A673 (cell line): ENCODE measurements at regions of chr16 and their contacts with region 1.

Region 1: GRCh38 chr16:14489460-14489859 is 140.6 kb downstream of the PARN start:
- DNase-seq: peak; percentile 78
- H3K4me3 ChIP-seq: no peak overlapping the region
- H3K27ac ChIP-seq: no peak overlapping the region
- H3K4me1 ChIP-seq: peaks cover 33% of the 10 kb centered on the region
- H3K27me3 ChIP-seq: no peaks in the 10 kb centered on the region
- CTCF ChIP-seq: peak; percentile 54

Region 2: GRCh38 chr16:14285513-14286385 is 203.7 kb before region 1 on chr16:
- CTCF ChIA-PET with region 1: no interaction called
- POLR2A ChIA-PET with region 1: no interaction called
- intact Hi-C with region 1: no loop called
- DNase-seq: peak; percentile 97
- H3K4me3 ChIP-seq: peak overlapping the region; percentile 79
- H3K27ac ChIP-seq: peak overlapping the region; percentile 67
- H3K4me1 ChIP-seq: peaks cover 1% of the 10 kb centered on the region
- H3K27me3 ChIP-seq: no peaks in the 10 kb centered on the region
- CTCF ChIP-seq: no peak

Region 3: GRCh38 chr16:14300705-14301168 is 188.7 kb before region 1 on chr16:
- CTCF ChIA-PET with region 1: interaction called, 19 read pairs
- POLR2A ChIA-PET with region 1: no interaction called
- intact Hi-C with region 1: no loop called
- DNase-seq: peak; percentile 67
- H3K4me3 ChIP-seq: peak overlapping the region; percentile 49
- H3K27ac ChIP-seq: no peak overlapping the region
- H3K4me1 ChIP-seq: peaks cover 9% of the 10 kb centered on the region
- H3K27me3 ChIP-seq: no peaks in the 10 kb centered on the region
- CTCF ChIP-seq: peak; percentile 55

Region 4: GRCh38 chr16:14427371-14427948 is 62.0 kb before region 1 on chr16:
- CTCF ChIA-PET with region 1: no interaction called
- POLR2A ChIA-PET with region 1: no interaction called
- intact Hi-C with region 1: no loop called
- DNase-seq: no peak
- H3K4me3 ChIP-seq: no peak overlapping the region
- H3K27ac ChIP-seq: no peak overlapping the region
- H3K4me1 ChIP-seq: no peaks in the 10 kb centered on the region
- H3K27me3 ChIP-seq: no peaks in the 10 kb centered on the region
- CTCF ChIP-seq: no peak